ENCODE measurements at regions of chr14 and their contacts with region 1.

Region 1: GRCh38 chr14:91836119-91836881 is 31.0 kb downstream of the TC2N start:
- DNase-seq: peak; percentile 77 to 94
- ATAC-seq: peak; percentile 93
- H3K4me3 ChIP-seq: peak overlapping the region; percentile 92 to 95
- H3K27ac ChIP-seq: peak overlapping the region; percentile 89 to 92
- H3K4me1 ChIP-seq: peaks cover 4 to 6% of the 10 kb centered on the region in 2 donors
- H3K27me3 ChIP-seq: no peaks in the 10 kb centered on the region

Region 2: DNA sequence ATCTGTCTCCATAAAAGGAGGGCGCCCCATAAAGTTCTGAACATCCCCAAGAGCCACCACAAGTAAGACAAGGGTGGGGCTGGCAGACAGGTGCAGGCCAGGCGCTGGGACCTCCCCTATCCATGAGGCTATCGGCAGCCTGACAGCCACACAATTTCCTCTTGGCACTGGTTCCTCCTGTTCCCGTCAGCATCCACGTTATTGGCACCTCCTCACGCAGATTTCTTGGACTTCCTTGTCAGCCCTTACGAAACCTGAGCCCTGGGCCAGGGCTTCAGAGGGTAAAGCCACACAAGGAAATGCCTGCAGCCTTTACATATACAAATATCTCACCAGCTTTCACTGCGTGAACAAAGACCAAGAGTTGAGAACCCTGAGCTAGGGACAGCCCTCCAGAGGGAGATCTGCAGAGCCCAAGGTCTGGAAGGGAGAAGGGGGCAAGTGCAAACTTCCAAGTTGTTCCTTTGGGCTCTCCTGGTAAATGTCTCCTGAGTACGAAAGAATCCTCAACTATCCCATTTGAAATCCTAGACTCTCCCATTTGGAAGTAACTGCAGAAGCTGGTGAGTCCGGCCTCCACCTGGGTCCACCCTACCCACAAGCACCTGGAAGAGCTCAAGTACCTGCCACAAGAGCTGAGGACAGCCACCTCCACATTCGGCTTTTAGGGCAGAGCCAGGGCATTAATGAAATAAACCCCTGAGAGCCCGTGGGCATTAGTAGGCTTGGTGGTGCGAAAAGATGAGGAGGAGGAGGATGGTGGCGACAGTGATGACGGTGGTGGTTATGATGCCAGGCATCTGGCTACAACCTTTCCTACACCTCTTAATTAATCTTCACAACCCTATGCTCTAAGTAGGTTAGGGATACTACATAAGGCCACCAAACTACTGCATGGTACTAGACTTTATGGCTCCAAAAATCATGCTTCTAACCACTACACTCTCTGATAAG is 36.5 kb after region 1 on chr14:
- intact Hi-C with region 1: loop called in 1 of 2 experiments (anchors 5 kb)
- DNase-seq: peak; percentile 88 to 91
- ATAC-seq: peak; percentile 86
- H3K4me3 ChIP-seq: no peak overlapping the region
- H3K27ac ChIP-seq: peak overlapping the region; percentile 77 to 92
- H3K4me1 ChIP-seq: peaks cover 0 to 7% of the 10 kb centered on the region in 2 donors
- H3K27me3 ChIP-seq: no peaks in the 10 kb centered on the region

Region 3: GRCh38 chr14:91893007-91893406 is 56.7 kb after region 1 on chr14:
- intact Hi-C with region 1: loop called (anchors 5 kb)
- DNase-seq: no peak
- ATAC-seq: no peak
- H3K4me3 ChIP-seq: no peak overlapping the region
- H3K27ac ChIP-seq: peak overlapping the region; percentile 91 to 97
- H3K4me1 ChIP-seq: peaks cover 4 to 10% of the 10 kb centered on the region in 2 donors
- H3K27me3 ChIP-seq: no peaks in the 10 kb centered on the region